ENCODE measurements at regions of chr11 and their contacts with region 1.

Region 1: DNA sequence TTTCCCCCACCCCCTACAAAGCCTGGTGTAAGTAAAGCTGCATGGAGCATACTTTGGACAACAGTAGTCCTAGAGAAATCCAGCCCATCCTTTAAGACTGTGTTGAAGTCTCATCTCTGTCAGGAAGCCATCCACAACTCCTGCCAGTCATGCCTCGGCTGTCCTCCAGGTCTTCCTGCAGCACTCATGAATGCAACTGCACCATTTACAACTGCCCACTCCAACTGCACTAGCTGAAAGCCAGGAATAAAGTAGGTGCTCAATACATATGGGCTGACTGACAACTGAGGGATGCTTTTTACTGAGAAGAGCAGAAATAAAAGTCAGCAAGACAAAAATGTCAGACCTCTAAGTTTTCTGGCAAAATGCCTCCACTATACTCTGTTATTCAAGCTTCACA is 27.4 kb downstream of the IL18BP start:
- DNase-seq: no peak
- ATAC-seq: no peak
- H3K4me3 ChIP-seq: no peak overlapping the region
- H3K27ac ChIP-seq: no peak overlapping the region
- H3K4me1 ChIP-seq: peaks cover 22% of the 10 kb centered on the region
- H3K27me3 ChIP-seq: no peaks in the 10 kb centered on the region
- CTCF ChIP-seq: no peak

Region 2: DNA sequence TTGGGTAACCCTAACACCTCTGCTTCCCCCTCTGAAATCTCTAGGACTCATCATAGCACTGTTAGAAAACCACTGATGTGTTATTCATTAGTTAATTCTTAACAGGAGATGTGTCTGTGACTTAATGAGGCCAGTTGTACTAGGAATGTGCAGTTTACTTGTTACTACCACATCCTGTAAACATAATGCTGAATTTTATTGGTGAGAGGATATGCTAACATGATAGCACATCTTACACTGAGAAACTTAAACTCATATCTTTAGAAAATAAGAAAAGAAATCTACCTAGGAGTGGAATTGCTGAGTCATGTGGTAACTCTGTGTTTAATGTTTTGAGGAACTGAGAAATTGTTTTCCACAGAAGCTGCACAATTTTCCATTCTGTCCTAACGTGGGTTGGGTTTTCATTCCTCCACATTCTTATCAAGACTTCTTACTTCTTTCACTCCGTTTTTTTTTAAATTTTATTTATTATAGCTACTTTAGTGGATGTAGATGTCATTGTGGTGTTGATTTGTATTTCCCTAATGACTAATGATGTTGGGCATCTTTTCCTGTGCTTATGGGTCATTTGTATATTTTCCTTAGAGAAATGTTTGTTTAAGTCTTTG is 63.6 kb before region 1 on chr11:
- intact Hi-C with region 1: no loop called
- DNase-seq: no peak
- ATAC-seq: no peak
- H3K4me3 ChIP-seq: no peak overlapping the region
- H3K27ac ChIP-seq: no peak overlapping the region
- H3K4me1 ChIP-seq: peaks cover 4% of the 10 kb centered on the region
- H3K27me3 ChIP-seq: no peaks in the 10 kb centered on the region
- CTCF ChIP-seq: no peak

Region 3: DNA sequence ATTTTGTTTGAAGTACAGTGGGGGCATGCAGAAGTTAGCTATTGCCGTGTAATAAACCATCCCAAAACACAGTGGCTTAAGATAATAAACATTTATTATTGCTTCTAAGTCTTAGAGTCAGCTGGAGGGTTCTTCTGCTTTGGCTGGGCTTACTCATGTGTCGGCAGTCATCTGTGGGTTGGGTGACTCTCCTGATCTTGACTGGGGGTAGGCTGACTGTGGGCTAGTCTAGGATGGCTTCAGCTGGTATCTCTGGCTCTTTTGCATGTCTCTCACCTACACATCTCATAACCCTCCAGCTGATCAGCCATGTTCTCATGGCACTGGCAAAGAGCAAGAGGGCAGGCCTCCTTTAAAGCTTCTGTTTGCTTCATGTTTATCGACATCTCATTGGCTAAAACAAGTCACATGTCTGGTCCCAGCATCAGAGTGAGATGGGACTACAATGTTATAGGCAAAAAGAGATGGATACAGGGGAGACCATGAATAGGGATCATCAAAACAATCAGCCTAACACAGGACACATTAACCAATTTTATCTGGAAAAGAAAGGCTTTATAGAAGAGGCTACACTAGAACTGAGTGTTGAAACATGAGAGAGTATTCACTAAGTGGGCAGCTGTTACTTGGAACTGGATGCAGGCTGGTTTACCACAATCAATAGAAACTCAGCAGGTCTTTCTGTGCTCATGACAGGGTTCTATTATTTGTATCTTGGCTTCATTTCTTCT is 59.7 kb after region 1 on chr11:
- intact Hi-C with region 1: loop called (anchors 5 kb)
- DNase-seq: no peak
- ATAC-seq: no peak
- H3K4me3 ChIP-seq: no peak overlapping the region
- H3K27ac ChIP-seq: no peak overlapping the region
- H3K4me1 ChIP-seq: peaks cover 10% of the 10 kb centered on the region
- H3K27me3 ChIP-seq: no peaks in the 10 kb centered on the region
- CTCF ChIP-seq: no peak

Region 4: DNA sequence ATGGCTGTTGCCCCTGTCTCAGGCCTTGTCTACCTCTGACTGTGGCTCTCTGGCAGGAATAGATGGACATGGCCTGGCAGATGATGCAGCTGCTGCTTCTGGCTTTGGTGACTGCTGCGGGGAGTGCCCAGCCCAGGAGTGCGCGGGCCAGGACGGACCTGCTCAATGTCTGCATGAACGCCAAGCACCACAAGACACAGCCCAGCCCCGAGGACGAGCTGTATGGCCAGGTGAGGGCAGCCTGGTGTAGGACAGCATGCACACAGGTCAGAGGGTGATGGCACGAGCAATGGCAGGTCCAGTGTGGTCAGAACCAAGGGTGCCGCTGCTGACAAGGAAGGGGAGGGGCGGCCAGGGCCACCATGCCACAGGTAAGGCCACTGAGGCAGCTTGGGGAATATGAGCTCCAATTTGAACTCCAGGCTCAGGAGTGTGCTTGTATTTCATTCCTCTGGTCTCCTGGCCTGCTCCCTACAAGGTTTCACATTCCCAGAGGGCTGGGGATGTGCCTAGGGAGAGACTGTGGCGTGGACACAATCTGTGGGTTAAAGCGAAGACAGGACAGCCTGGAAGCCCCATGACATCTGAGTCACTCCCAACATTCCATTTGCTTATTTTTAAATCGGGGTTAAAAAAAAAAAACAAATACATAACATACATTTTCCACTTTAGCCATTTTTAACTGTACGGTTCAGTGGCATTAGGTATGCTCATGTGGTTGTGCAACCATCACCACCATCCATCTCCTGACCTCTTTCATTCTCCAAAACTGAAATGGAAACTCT is 110.0 kb after region 1 on chr11:
- intact Hi-C with region 1: no loop called
- DNase-seq: no peak
- ATAC-seq: no peak
- H3K4me3 ChIP-seq: no peak overlapping the region
- H3K27ac ChIP-seq: no peak overlapping the region
- H3K4me1 ChIP-seq: no peaks in the 10 kb centered on the region
- H3K27me3 ChIP-seq: peaks cover 4% of the 10 kb centered on the region
- CTCF ChIP-seq: no peak